B cell (primary cell): ENCODE measurements at regions of chr13 and their contacts with region 1.

Region 1: DNA sequence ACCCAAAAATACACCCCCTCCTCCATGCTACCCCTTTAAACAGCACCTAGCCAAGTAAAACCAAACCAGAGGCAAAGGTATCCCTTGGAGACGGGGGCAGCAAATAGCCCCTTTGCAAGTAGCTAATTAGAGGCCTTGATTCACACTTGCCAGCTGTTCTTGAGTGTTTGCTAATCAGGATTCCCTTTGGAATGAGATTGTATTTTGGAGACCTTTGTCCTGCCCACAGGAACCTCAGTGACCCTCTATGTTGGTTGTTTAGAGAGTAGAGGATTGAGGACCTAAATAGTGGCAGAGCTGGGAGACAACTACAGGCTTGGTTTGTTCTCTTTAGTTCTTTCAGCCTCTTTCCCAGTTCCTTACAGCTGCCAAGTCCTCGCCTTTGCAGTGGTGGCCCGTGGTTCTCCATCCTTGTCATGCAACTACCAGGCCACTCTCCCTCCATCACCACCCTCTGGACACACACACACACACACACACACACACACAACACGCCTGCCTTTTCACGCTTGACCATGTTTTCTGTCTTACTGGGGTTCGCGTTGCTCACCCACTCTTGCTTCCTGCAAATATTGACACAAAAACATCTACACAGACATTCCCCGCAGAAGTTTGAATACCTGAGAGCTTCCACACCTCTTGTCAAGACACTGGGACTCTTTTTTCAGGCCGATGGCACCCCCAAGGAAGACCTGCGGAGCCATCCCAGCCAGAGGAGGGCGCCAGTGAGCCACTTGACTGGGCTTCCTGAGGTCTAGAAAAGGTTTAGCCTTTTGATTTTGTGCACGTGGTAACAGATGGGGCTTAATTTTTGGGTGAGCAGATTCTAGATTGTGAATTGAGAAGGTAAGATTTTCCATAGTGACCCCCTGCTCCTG is 80.0 kb upstream of the GPR183 start:
- DNase-seq: peak; percentile 89
- ATAC-seq: peak; percentile 68
- H3K4me3 ChIP-seq: no peak overlapping the region
- H3K4me3 Mint-ChIP-seq: peak overlapping the region; percentile 58
- H3K27ac ChIP-seq: peak overlapping the region; percentile 8 to 69
- H3K27ac Mint-ChIP-seq: peak overlapping the region; percentile 91
- H3K4me1 ChIP-seq: peaks cover 35 to 44% of the 10 kb centered on the region in 2 donors
- H3K4me1 Mint-ChIP-seq: peaks cover 46% of the 10 kb centered on the region
- H3K27me3 ChIP-seq: no peaks in the 10 kb centered on the region
- H3K27me3 Mint-ChIP-seq: no peaks in the 10 kb centered on the region
- CTCF ChIP-seq: peak; percentile 88

Region 2: GRCh38 chr13:99176309-99177276 is 210.6 kb before region 1 on chr13:
- CTCF ChIA-PET with region 1: interaction called, 13 read pairs
- POLR2A ChIA-PET with region 1: no interaction called
- intact Hi-C with region 1: loop called (anchors 1 kb)
- DNase-seq: peak; percentile 88
- ATAC-seq: peak; percentile 84
- H3K4me3 ChIP-seq: no peak overlapping the region
- H3K4me3 Mint-ChIP-seq: peak overlapping the region; percentile 58
- H3K27ac ChIP-seq: no peak overlapping the region
- H3K27ac Mint-ChIP-seq: peak overlapping the region; percentile 72
- H3K4me1 ChIP-seq: peaks cover 37 to 43% of the 10 kb centered on the region in 2 donors
- H3K4me1 Mint-ChIP-seq: peaks cover 39% of the 10 kb centered on the region
- H3K27me3 ChIP-seq: no peaks in the 10 kb centered on the region
- H3K27me3 Mint-ChIP-seq: no peaks in the 10 kb centered on the region
- CTCF ChIP-seq: peak; percentile 96

Region 3: GRCh38 chr13:99307648-99308339 is 79.4 kb before region 1 on chr13:
- CTCF ChIA-PET with region 1: interaction called, 39 read pairs
- POLR2A ChIA-PET with region 1: interaction called, 3 read pairs
- intact Hi-C with region 1: loop called (anchors 1 kb)
- DNase-seq: no peak
- ATAC-seq: peak; percentile 25
- H3K4me3 ChIP-seq: peak overlapping the region; percentile 37 to 97 (median 71)
- H3K4me3 Mint-ChIP-seq: peak overlapping the region; percentile 99
- H3K27ac ChIP-seq: peak overlapping the region; percentile 73 to 87
- H3K27ac Mint-ChIP-seq: peak overlapping the region; percentile 95
- H3K4me1 ChIP-seq: peaks cover 49 to 60% of the 10 kb centered on the region in 2 donors
- H3K4me1 Mint-ChIP-seq: peaks cover 69% of the 10 kb centered on the region
- H3K27me3 ChIP-seq: no peaks in the 10 kb centered on the region
- H3K27me3 Mint-ChIP-seq: no peaks in the 10 kb centered on the region
- CTCF ChIP-seq: no peak

Region 4: DNA sequence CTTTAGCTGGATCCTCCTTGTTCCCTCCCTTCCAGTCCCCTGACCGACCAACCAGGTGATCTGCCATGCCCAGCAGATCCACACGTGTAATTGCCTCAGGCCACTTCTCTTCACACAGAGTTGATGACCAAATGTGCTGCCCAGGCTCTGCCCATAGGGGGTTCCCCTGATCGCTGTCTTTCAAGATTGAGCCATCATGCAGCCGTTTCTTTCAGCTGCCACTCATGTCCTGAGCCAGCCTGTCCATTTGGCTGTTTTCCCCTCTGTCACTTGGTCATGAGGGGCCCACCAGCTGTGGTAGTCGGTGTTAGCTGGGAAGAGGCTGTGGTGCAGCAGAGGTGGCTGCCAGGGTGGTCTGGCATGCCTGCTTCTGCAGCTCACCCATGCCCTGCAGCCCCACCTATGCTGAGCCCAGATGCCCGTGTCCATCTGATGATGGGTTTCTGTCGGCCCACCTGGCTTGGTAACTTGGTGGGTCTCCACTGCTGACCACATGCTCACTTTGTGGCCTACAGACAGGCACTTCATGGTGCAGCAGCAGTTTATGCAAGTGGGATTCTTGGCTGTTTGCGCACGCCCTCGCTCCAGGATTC is 44.3 kb before region 1 on chr13:
- CTCF ChIA-PET with region 1: interaction called, 19 read pairs
- POLR2A ChIA-PET with region 1: no interaction called
- intact Hi-C with region 1: no loop called
- DNase-seq: no peak
- ATAC-seq: no peak
- H3K4me3 ChIP-seq: no peak overlapping the region
- H3K4me3 Mint-ChIP-seq: no peak overlapping the region
- H3K27ac ChIP-seq: no peak overlapping the region
- H3K27ac Mint-ChIP-seq: no peak overlapping the region
- H3K4me1 ChIP-seq: peaks cover 14 to 27% of the 10 kb centered on the region in 2 donors
- H3K4me1 Mint-ChIP-seq: peaks cover 45% of the 10 kb centered on the region
- H3K27me3 ChIP-seq: no peaks in the 10 kb centered on the region
- H3K27me3 Mint-ChIP-seq: no peaks in the 10 kb centered on the region
- CTCF ChIP-seq: no peak

Region 5: DNA sequence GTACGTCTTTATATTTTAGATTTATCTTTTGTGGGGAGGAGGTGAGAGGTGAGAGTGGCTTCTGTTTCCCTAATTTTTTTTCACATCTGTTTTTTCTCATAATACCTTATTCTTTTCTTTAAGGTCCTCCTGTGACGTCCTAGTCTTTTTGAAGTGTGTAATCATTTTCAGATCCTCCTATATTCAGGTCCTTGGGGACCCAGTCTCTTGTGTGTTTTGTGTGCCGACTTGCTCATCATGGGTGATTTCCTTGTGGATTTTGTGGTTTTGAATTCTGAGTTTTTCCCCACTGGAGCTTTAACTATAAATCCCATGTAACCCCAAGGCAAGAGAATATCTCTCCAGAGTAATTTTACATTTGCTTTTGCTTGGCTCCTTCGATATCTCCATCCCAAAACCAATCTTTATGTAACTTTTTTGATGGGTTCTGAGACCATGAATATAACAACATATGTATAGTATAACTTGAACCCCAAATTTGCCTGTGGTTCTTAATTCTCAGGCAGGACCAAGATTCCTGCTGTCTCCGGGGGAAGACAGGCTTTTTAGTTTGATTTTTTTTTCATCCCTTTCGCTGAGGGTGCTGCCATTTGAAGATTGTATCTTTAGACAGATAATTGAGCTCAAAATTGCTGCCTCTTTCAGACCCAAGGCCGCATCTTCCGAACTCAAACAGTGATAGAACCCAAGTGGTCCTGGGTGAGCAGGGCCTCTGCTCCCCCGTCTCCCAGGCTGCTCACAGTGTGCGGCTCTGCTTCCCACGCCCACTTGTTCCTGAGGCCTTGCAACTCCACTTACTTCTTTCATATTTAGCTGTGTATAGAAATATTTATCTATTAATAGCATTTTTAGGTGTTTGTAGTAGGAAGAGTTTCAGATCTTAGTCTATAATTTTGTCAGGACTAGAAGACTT is 20.8 kb before region 1 on chr13:
- CTCF ChIA-PET with region 1: interaction called, 12 read pairs
- POLR2A ChIA-PET with region 1: no interaction called
- intact Hi-C with region 1: no loop called
- DNase-seq: peak; percentile 85
- ATAC-seq: peak; percentile 85
- H3K4me3 ChIP-seq: peak overlapping the region in 1 of 5 experiments; percentile 17
- H3K4me3 Mint-ChIP-seq: peak overlapping the region; percentile 63
- H3K27ac ChIP-seq: peak overlapping the region; percentile 19 to 29
- H3K27ac Mint-ChIP-seq: peak overlapping the region; percentile 82
- H3K4me1 ChIP-seq: peaks cover 53% of the 10 kb centered on the region in 2 donors
- H3K4me1 Mint-ChIP-seq: peaks cover 77% of the 10 kb centered on the region
- H3K27me3 ChIP-seq: no peaks in the 10 kb centered on the region
- H3K27me3 Mint-ChIP-seq: no peaks in the 10 kb centered on the region
- CTCF ChIP-seq: no peak

Region 6: GRCh38 chr13:99442273-99442895 is 55.2 kb after region 1 on chr13:
- CTCF ChIA-PET with region 1: interaction called, 260 read pairs
- POLR2A ChIA-PET with region 1: no interaction called
- intact Hi-C with region 1: loop called (anchors 1 kb)
- DNase-seq: peak; percentile 76
- ATAC-seq: peak; percentile 80
- H3K4me3 ChIP-seq: no peak overlapping the region
- H3K4me3 Mint-ChIP-seq: no peak overlapping the region
- H3K27ac ChIP-seq: no peak overlapping the region
- H3K27ac Mint-ChIP-seq: no peak overlapping the region
- H3K4me1 ChIP-seq: peaks cover 14 to 17% of the 10 kb centered on the region in 2 donors
- H3K4me1 Mint-ChIP-seq: peaks cover 15% of the 10 kb centered on the region
- H3K27me3 ChIP-seq: no peaks in the 10 kb centered on the region
- H3K27me3 Mint-ChIP-seq: no peaks in the 10 kb centered on the region
- CTCF ChIP-seq: peak; percentile 99

Region 7: GRCh38 chr13:99498171-99499161 is 111.3 kb after region 1 on chr13:
- CTCF ChIA-PET with region 1: no interaction called
- POLR2A ChIA-PET with region 1: no interaction called
- intact Hi-C with region 1: no loop called
- DNase-seq: peak; percentile 98
- ATAC-seq: peak; percentile 69
- H3K4me3 ChIP-seq: peak overlapping the region; percentile 53 to 69 (median 66)
- H3K4me3 Mint-ChIP-seq: peak overlapping the region; percentile 81
- H3K27ac ChIP-seq: peak overlapping the region; percentile 83 to 85
- H3K27ac Mint-ChIP-seq: peak overlapping the region; percentile 90
- H3K4me1 ChIP-seq: peaks cover 50 to 64% of the 10 kb centered on the region in 2 donors
- H3K4me1 Mint-ChIP-seq: peaks cover 68% of the 10 kb centered on the region
- H3K27me3 ChIP-seq: no peaks in the 10 kb centered on the region
- H3K27me3 Mint-ChIP-seq: no peaks in the 10 kb centered on the region
- CTCF ChIP-seq: no peak